ENCODE measurements at regions of chr10 and their contacts with region 1.

Region 1: GRCh38 chr10:43322769-43323168 is 48.7 kb upstream of the FXYD4 start:
- DNase-seq: peak; percentile 85
- H3K4me3 Mint-ChIP-seq: no peak overlapping the region
- H3K27ac Mint-ChIP-seq: no peak overlapping the region
- H3K4me1 Mint-ChIP-seq: peaks cover 39% of the 10 kb centered on the region
- H3K27me3 Mint-ChIP-seq: peaks cover 15% of the 10 kb centered on the region

Region 2: GRCh38 chr10:43190775-43191174 is 132.0 kb before region 1 on chr10:
- intact Hi-C with region 1: no loop called
- DNase-seq: no peak
- H3K4me3 Mint-ChIP-seq: no peak overlapping the region
- H3K27ac Mint-ChIP-seq: no peak overlapping the region
- H3K4me1 Mint-ChIP-seq: no peaks in the 10 kb centered on the region
- H3K27me3 Mint-ChIP-seq: no peaks in the 10 kb centered on the region

Region 3: DNA sequence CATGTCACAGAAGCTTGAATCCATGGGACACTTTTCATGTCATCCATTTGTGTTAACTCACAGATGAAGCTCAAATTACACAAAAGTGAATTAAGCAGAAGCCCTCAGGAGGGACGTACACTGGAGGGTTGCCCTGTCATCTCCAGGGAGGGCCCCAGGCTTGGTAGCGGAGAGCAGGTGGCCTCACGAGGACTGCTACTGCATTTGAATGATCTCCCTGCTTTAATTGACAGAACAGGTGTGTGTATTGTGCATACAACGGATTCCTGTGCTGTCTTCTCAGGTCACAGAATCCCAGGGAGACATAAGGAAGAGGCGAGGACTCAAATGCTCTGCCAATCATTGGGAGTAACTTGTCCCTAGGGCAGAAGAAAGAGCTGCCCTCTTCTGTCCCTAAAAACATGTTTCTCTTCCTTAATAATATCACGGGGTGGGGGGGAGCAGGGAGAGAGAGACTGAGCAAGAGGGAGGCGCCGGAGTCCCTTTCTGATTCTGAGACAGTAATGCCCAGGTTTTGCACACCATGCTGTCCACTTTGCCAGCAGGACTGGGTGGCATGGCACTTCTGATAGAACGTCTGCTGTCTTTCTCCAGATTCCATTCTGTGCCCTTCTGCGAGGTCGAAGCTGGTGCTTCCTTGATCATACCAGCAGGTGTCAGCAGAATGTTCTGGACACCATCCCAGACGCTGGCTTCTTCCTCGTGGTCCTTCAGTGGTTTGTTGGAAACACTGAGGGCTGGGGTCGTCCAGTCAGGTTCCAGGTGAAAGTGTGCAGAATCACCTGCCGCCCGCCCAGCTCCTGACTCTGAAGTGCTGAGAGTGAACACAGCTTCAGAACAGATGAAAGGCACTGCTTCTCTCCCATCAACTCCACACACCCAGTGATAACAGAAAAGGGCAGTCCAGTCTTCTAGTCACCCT is 29.8 kb before region 1 on chr10:
- intact Hi-C with region 1: loop called (anchors 2 kb)
- DNase-seq: no peak
- H3K4me3 Mint-ChIP-seq: peak overlapping the region; percentile 9
- H3K27ac Mint-ChIP-seq: peak overlapping the region; percentile 73
- H3K4me1 Mint-ChIP-seq: peaks cover 86% of the 10 kb centered on the region
- H3K27me3 Mint-ChIP-seq: peaks cover 9% of the 10 kb centered on the region